ENCODE measurements at regions of chr1 and their contacts with region 1.

Region 1: GRCh38 chr1:146012737-146013403 is 8.7 kb downstream of the HJV start:
- DNase-seq: peak in 2 of 4 donors; percentile 63 to 73
- ATAC-seq: peak; percentile 67
- H3K4me3 ChIP-seq: no peak overlapping the region
- H3K27ac ChIP-seq: no peak overlapping the region
- H3K4me1 ChIP-seq: peaks cover 0 to 37% of the 10 kb centered on the region in 2 donors
- H3K27me3 ChIP-seq: no peaks in the 10 kb centered on the region
- CTCF ChIP-seq: peak; percentile 31 to 64

Region 2: GRCh38 chr1:145845514-145846161 is 167.2 kb before region 1 on chr1 and contains the start of gene NUDT17:
- intact Hi-C with region 1: loop called in 1 of 2 experiments (anchors 10 kb)
- DNase-seq: peak; percentile 80 to 96 (median 86)
- ATAC-seq: peak; percentile 89
- H3K4me3 ChIP-seq: peak within 1 kb of the TSS; percentile 52 to 64
- H3K27ac ChIP-seq: peak within 1 kb of the TSS; percentile 73 to 82
- H3K4me1 ChIP-seq: peaks cover 9 to 16% of the 10 kb centered on the region in 2 donors
- H3K27me3 ChIP-seq: no peaks in the 10 kb centered on the region
- CTCF ChIP-seq: peak; percentile 88 to 93
- polyA plus RNA-seq, gene NUDT17: 8.5 to 12.7 (median 10.5) TPM

Region 3: GRCh38 chr1:145936247-145936646 is 76.6 kb before region 1 on chr1:
- intact Hi-C with region 1: no loop called
- DNase-seq: no peak
- ATAC-seq: peak; percentile 73
- H3K4me3 ChIP-seq: no peak overlapping the region
- H3K27ac ChIP-seq: no peak overlapping the region
- H3K4me1 ChIP-seq: peaks cover 0 to 22% of the 10 kb centered on the region in 2 donors
- H3K27me3 ChIP-seq: no peaks in the 10 kb centered on the region
- CTCF ChIP-seq: no peak

Region 4: DNA sequence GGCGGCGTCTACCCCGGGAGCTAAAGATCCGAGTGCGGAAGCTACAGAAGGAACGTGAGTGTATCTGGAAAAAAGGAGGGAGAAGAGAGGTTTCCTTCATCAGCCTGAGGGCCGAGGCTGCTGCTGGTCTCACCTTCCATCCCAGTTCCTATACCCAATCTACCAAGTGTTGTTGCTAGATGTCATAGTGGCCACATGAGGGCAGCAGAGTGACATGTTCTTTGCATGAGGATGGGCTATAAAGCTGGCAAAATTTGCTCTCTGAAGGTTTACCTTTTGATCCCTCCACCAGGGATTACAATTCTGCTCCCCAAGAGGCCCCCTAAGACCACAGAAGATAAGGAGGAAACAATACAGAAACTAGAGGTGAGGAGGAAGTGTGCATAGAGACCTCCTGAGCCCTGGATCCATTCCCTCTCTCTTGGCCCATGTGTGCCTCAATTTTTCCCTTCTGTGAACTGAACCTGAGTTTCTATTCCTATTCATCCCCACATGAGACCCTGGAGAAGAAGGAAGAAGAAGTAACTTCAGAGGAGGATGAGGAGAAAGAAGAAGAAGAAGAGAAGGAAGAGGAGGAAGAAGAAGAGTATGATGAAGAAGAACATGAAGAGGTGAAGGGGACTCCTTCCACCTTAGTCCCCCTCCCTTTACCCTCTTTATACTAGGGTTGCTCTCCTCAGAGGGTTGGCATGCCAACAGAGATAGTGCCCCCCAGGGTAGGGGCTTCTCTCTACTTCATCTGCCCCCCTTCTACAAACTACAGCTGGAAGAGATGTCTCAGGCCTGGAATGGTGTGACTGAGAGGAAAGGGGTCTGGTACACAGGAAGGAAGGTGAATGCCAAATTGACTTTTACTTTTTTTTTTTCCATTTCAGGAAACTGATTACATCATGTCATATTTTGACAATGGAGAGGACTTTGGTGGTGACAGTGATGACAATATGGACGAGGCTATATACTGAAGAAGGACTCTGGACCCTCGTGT is 35.1 kb before region 1 on chr1:
- intact Hi-C with region 1: loop called in 1 of 2 experiments (anchors 2 kb)
- DNase-seq: peak in 2 of 4 donors; percentile 82 to 91
- ATAC-seq: peak; percentile 65
- H3K4me3 ChIP-seq: peak overlapping the region in 1 of 2 donors; percentile 22
- H3K27ac ChIP-seq: peak overlapping the region; percentile 99 to 100
- H3K4me1 ChIP-seq: peaks cover 35 to 62% of the 10 kb centered on the region in 2 donors
- H3K27me3 ChIP-seq: no peaks in the 10 kb centered on the region
- CTCF ChIP-seq: peak; percentile 73 to 90

Region 5: GRCh38 chr1:147225193-147225730 is 1212.4 kb after region 1 on chr1 and contains the start of gene FMO5:
- intact Hi-C with region 1: no loop called
- DNase-seq: peak; percentile 77 to 88 (median 82)
- ATAC-seq: peak; percentile 92
- H3K4me3 ChIP-seq: peak within 1 kb of the TSS; percentile 45 to 60
- H3K27ac ChIP-seq: peak within 1 kb of the TSS; percentile 82 to 84
- H3K4me1 ChIP-seq: peaks cover 0 to 16% of the 10 kb centered on the region in 2 donors
- H3K27me3 ChIP-seq: no peaks in the 10 kb centered on the region
- CTCF ChIP-seq: peak in 1 of 2 donors; percentile 37
- polyA plus RNA-seq, gene FMO5: 9.1 to 13.2 (median 11.2) TPM

Measured in left lung (tissue), 14 donors.